Esophagus muscularis mucosa (tissue), 4 donors: ENCODE measurements at regions of chr21 and their contacts with region 1.

Region 1: DNA sequence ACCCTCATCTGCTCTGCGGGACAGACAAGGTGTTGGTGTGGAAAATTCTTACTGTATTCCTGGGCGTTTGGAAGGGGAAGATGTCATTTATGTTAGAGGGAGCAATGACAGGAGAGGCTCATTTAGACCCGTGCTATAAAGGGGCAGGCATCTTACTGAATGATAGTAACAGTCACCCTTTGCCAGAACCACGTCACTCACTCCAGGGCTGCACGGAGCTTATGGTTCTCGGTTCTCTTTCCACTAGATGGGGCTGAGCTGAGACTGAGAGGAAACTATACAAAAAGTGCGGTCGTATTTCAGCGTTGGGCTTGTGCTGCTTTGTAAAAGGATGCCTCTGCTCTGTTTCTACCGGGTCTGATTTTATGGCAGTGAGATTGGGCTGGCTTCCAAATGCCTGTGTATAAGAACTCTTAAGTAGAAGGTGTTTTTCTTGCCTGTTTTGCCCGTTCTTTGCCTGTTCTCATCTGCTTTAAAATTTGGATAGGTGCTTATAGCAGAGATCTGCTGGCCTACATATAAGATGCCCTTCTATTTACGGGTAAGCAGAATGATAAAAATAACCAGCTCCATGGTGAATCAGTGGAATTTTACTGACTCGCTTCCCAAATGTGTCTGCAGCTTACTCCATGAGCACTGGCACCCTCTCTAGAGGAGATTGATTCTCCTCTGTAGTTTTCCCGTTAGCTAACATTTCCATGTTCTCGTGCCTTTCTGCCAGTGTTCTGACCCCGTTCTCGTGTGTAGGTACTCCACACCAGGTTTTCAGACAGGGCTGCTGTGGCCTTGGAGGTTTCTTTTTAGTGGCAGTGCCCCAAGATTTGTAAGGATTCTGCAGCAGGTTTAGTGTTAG is 55.9 kb downstream of the MRPS6 start:
- DNase-seq: peak; percentile 74
- H3K4me3 ChIP-seq: peak overlapping the region; percentile 12 to 32 (median 31)
- H3K27ac ChIP-seq: peak overlapping the region; percentile 79 to 85 (median 84)
- H3K4me1 ChIP-seq: peaks cover 64 to 86% (median 79%) of the 10 kb centered on the region in 4 donors
- H3K27me3 ChIP-seq: no peaks in the 10 kb centered on the region
- CTCF ChIP-seq: peak in 2 of 3 experiments; percentile 17 to 44
- EP300 ChIP-seq: no peak
- POLR2A ChIP-seq: no peak

Region 2: GRCh38 chr21:34202553-34203372 is 73.5 kb after region 1 on chr21:
- intact Hi-C with region 1: loop called (anchors 5 kb)
- DNase-seq: no peak
- H3K4me3 ChIP-seq: peak overlapping the region; percentile 51 to 69 (median 54)
- H3K27ac ChIP-seq: peak overlapping the region; percentile 65 to 77 (median 74)
- H3K4me1 ChIP-seq: peaks cover 13 to 56% (median 34%) of the 10 kb centered on the region in 4 donors
- H3K27me3 ChIP-seq: no peaks in the 10 kb centered on the region
- CTCF ChIP-seq: no peak
- EP300 ChIP-seq: no peak
- POLR2A ChIP-seq: no peak

Region 3: GRCh38 chr21:34345091-34345871 is 216.0 kb after region 1 on chr21:
- intact Hi-C with region 1: loop called (anchors 5 kb)
- DNase-seq: no peak
- H3K4me3 ChIP-seq: no peak overlapping the region
- H3K27ac ChIP-seq: peak overlapping the region; percentile 55 to 66 (median 60)
- H3K4me1 ChIP-seq: peaks cover 24 to 42% (median 39%) of the 10 kb centered on the region in 4 donors
- H3K27me3 ChIP-seq: no peaks in the 10 kb centered on the region
- CTCF ChIP-seq: no peak
- EP300 ChIP-seq: no peak
- POLR2A ChIP-seq: no peak